PC-3 (cell line): ENCODE measurements at regions of chr14 and their contacts with region 1.

Region 1: DNA sequence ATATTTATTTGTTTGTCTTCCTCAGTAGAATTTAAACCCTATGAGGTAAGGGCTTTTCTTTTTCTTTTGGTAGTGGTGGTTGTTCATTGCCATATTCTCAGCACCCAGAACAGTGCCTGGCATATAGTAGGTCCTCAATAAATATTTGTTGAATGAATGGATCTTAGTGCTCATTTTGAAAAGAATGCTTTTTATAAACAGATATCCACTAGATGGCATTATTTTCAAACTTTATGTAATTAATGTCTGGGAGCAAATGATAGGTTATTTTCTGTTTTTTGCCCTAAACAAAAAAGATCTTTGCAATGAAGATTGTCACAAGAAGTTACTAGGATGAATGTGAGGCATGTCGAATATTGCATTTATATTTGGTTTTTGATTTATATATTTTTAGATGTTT is 64.1 kb downstream of the RAD51B start:
- DNase-seq: peak; percentile 62
- ATAC-seq: peak; percentile 50; the same call in 1 of the 2 replicates
- H3K4me3 ChIP-seq: no peak overlapping the region
- H3K27ac ChIP-seq: no peak overlapping the region
- H3K4me1 ChIP-seq: no peaks in the 10 kb centered on the region
- H3K27me3 ChIP-seq: no peaks in the 10 kb centered on the region
- CTCF ChIP-seq: peak; percentile 63

Region 2: DNA sequence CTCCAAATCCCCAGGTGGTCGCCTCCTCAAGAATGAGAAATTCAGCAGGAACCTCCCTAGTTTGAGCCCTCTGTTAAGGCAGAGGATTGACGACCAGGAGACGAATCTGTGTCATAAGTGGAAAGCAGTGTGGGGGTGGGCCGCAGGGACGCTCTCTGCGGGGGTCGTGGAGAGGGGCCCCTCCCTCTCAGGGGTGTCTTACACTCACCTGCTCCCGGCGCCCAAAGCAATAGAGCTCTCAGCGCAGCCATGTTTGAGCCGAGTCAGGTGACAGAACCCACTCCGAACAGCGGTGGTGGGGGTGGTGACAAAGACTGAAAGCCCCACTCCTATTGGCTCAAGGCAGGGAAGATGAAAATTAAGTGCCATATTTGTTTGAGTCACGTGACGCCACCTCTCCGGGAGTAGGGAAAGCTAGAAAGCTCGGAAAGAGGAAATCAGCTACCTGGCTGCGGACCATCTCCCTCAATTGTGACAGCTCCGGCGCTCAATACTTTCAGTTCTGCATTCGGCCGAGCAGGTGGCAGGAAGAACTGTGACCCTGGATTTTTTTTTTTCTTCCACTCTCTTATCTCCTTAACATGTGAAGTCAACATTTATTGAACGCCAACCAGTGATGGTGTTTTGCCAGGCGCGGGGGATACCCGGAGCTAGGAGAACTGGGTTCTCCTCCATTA is 67.3 kb before region 1 on chr14 and contains the start of gene ZFYVE26:
- CTCF ChIA-PET with region 1: no interaction called
- POLR2A ChIA-PET with region 1: no interaction called
- intact Hi-C with region 1: no loop called
- DNase-seq: peak; percentile 98
- ATAC-seq: peak; percentile 94
- H3K4me3 ChIP-seq: peak within 1 kb of the TSS; percentile 82
- H3K27ac ChIP-seq: peak within 1 kb of the TSS; percentile 24
- H3K4me1 ChIP-seq: peaks cover 28% of the 10 kb centered on the region
- H3K27me3 ChIP-seq: no peaks in the 10 kb centered on the region
- CTCF ChIP-seq: no peak
- total RNA-seq, gene ZFYVE26: 20.0 and 21.1 TPM in 2 replicates

Region 3: DNA sequence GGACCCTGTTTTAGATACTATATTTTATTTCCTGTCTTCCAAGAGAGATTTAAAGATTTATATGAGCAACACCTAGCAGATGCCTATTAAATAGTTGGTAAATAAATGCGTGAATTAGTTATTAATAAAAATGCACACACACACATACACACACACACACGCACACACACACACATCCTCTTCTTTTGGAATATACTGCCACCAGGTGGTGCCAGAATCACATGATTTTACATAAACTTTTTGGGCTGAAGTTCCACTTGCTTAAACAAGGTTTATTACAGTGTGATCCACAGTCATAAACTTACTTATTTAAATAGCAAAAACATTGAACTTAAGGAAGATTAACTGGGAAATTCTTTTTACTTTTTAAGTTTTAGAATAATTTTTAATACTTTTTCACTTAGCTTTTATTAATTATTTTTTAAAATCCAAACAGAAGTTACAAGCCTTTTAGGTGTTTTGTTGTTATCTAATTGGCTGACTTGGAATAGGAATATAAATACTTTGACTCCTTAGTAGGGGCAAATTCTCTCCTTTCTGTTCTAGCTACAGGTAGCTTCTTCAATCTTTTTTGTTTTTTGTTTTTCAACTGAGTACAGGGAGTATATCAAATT is 46.6 kb before region 1 on chr14:
- CTCF ChIA-PET with region 1: interaction called, 5 read pairs
- POLR2A ChIA-PET with region 1: interaction called, 5 read pairs
- intact Hi-C with region 1: loop called (anchors 5 kb)
- DNase-seq: peak; percentile 86
- ATAC-seq: peak; percentile 82
- H3K4me3 ChIP-seq: no peak overlapping the region
- H3K27ac ChIP-seq: no peak overlapping the region
- H3K4me1 ChIP-seq: peaks cover 7% of the 10 kb centered on the region; the same call in 1 of the 2 replicates
- H3K27me3 ChIP-seq: no peaks in the 10 kb centered on the region
- CTCF ChIP-seq: peak; percentile 93

Region 4: DNA sequence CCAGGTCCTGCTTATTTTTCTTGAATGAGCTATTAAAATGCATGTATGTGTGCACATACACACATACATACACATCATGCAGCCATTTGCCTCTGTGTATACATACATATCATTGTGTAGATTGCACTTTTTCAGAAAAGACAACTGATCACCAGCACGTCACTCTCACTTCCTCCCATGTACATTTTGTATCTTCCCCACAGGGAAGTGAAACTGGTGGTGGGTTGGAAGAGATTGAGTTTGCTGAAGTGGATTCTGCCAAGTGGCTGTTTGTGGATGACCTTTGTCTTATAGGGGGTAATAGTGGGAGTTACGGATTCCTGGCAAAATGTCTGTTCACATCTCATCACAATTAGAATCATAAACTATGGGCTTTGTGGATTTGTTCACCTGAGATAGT is 384.5 kb after region 1 on chr14:
- CTCF ChIA-PET with region 1: no interaction called
- POLR2A ChIA-PET with region 1: no interaction called
- intact Hi-C with region 1: no loop called
- DNase-seq: no peak
- ATAC-seq: no peak
- H3K4me3 ChIP-seq: no peak overlapping the region
- H3K27ac ChIP-seq: no peak overlapping the region
- H3K4me1 ChIP-seq: no peaks in the 10 kb centered on the region
- H3K27me3 ChIP-seq: no peaks in the 10 kb centered on the region
- CTCF ChIP-seq: no peak

Region 5: DNA sequence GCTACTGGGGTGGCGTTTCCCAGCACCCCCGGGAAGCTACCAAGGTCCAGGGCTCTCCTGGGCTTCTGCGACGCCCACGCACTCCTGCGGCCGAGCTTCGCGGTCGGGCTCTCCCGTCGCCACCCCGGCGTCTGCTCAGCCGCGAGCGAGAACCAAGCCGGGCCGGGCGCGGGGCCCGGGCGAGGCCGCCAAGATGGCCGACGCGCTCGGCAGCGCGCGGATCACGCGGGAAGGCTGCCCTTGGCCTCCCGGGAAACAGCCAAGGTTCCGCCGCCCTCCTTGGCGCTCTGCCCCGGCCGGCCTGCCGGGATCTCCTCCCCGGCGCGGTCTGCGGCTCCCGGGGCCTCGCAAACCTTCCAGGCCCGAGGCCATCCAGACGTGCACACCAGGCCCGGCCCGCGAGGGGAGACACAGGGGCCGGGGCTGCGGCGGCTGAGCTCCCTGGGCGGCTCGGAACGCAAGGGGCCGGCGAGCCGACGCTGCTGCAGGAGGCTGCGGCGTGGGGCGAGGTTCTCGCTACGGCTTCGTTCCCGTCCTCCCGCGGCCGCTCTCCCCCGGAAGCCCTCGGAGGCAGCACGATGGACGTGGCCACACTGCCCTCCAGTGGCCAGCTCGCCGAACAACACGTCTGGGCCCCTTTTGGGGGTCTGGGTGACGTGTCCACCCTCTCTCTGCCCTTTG is 932.7 kb after region 1 on chr14:
- CTCF ChIA-PET with region 1: no interaction called
- POLR2A ChIA-PET with region 1: no interaction called
- intact Hi-C with region 1: loop called (anchors 2 kb)
- DNase-seq: peak; percentile 92
- ATAC-seq: peak; percentile 90
- H3K4me3 ChIP-seq: peak overlapping the region; percentile 60
- H3K27ac ChIP-seq: peak overlapping the region; percentile 83
- H3K4me1 ChIP-seq: peaks cover 22% of the 10 kb centered on the region
- H3K27me3 ChIP-seq: no peaks in the 10 kb centered on the region
- CTCF ChIP-seq: peak; percentile 97

Region 6: GRCh38 chr14:68824517-68825347 is 941.0 kb after region 1 on chr14:
- CTCF ChIA-PET with region 1: no interaction called
- POLR2A ChIA-PET with region 1: interaction called, 13 read pairs
- intact Hi-C with region 1: no loop called
- DNase-seq: peak; percentile 90
- ATAC-seq: peak; percentile 92
- H3K4me3 ChIP-seq: no peak overlapping the region
- H3K27ac ChIP-seq: no peak overlapping the region
- H3K4me1 ChIP-seq: no peaks in the 10 kb centered on the region; the same call in 1 of the 2 replicates
- H3K27me3 ChIP-seq: no peaks in the 10 kb centered on the region
- CTCF ChIP-seq: peak; percentile 97

Region 7: DNA sequence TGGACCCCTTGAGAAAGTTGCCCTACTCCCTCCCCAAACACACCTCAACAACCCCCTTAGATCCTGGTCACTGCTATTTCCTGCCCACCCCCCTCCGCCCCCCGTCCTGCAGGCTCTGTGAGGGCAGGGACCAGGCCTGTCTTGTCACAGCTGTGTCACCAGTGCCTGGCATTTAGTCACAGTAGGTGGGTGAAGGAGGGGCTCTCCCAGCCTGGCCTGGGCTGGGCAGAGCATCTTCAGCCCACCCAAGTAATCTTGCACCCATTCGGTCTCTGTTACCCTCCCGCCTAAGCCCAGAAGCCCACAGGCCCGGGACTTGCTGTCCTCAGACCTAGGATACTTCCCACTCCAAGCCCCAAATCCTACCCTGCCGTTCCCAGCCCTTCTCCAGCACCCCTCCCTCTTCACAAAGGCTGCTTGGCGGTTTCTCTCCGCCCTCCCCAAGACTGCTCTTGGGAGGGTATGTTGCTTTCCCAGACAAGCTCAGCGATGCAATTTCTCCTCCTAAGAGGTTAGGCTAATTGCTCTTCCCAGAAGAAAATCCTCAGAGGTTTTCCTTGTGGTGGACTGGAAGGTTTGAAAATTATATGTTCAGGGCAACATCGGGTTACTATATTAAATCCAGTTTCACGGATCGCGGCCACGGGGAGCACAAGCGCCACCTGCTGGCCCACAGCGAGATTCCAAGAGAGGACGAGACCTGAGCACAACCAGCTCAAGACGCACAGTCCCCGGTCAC is 959.9 kb after region 1 on chr14:
- CTCF ChIA-PET with region 1: interaction called, 8 read pairs
- POLR2A ChIA-PET with region 1: no interaction called
- intact Hi-C with region 1: loop called (anchors 1 kb)
- DNase-seq: peak; percentile 80
- ATAC-seq: peak; percentile 87
- H3K4me3 ChIP-seq: peak overlapping the region; percentile 48; the same call in 1 of the 2 replicates
- H3K27ac ChIP-seq: no peak overlapping the region
- H3K4me1 ChIP-seq: peaks cover 14% of the 10 kb centered on the region
- H3K27me3 ChIP-seq: no peaks in the 10 kb centered on the region
- CTCF ChIP-seq: peak; percentile 98